ENCODE measurements at regions of chr21 and their contacts with region 1.

Region 1: DNA sequence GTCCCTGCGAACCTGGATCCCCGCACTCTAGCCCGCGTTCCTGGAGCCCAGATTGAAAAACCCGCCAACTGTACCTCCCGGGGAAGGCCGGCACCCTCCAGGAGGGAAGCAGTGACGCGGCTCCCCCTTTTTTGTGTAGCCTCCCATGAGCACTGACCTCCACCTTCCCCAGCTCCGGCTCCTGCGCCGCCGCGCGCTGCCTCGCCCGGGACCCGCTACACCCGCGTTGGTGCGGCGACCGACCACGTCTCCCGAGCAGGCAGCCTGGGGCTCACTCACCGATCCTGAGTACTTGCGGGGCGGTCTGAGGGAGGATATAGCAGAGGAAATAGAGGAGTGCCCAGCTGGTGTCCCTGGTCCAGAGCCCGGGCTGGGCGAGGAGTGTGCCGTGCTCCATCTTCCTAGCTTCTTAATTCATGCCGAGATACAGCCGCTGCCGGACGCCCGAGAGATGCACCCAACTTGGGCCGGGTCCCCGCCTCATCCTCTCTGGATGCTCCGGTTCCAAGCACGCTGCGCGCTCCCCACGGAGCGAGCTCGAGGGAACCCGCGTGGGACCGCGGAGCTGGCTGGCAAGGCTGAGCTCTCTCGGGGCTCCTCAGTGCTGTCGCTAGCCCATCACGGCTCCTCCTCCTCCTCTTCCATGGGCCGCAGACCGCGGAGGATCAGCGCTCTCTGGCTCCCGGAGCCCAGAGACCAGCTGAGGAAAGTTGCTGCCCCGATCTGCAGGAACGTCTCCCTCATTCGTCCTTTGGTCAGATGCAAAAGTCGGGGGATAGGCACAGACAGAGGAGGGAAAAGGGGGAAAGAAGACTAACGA is 482 bp downstream of the GRIK1 start:
- DNase-seq: no peak
- H3K4me3 ChIP-seq: no peak overlapping the region
- H3K27me3 ChIP-seq: peaks cover 14% of the 10 kb centered on the region
- CTCF ChIP-seq: no peak

Region 2: DNA sequence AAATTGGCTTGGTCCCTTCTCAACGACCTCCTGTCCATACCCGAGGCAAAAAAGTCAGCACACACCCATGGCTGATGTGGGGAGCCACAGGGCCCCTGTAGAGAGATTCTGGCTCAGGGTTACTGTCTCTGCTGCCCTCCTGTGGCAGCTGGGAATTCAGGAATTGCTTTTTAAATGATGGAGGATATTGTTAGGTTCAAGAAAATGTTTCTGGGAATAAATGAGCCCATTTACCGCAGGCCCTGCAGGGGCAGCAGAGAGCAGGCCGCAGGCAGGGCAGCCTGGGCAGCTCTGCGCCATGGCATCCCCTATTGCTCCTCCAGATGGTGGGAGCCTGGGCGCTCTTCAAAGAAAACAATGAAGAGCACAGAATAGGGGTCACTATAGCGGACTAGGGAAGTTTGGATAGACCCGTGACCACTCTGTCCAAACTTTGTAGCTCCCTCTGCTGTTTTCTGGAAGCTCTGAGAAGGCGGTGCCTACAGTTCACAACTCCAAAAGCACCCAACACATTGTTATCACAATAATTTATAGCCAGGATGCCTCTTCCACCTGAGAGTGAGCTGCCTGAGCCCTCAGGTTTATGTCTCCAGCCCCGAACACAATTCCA is 439.5 kb before region 1 on chr21:
- CTCF ChIA-PET with region 1: no interaction called
- POLR2A ChIA-PET with region 1: interaction called, 13 read pairs
- DNase-seq: no peak
- H3K4me3 ChIP-seq: no peak overlapping the region
- H3K27me3 ChIP-seq: no peaks in the 10 kb centered on the region
- CTCF ChIP-seq: peak; percentile 52

Region 3: GRCh38 chr21:29888437-29888836 is 50.9 kb before region 1 on chr21:
- CTCF ChIA-PET with region 1: no interaction called
- POLR2A ChIA-PET with region 1: no interaction called
- DNase-seq: peak; percentile 5
- H3K4me3 ChIP-seq: no peak overlapping the region
- H3K27me3 ChIP-seq: no peaks in the 10 kb centered on the region
- CTCF ChIP-seq: no peak

Region 4: DNA sequence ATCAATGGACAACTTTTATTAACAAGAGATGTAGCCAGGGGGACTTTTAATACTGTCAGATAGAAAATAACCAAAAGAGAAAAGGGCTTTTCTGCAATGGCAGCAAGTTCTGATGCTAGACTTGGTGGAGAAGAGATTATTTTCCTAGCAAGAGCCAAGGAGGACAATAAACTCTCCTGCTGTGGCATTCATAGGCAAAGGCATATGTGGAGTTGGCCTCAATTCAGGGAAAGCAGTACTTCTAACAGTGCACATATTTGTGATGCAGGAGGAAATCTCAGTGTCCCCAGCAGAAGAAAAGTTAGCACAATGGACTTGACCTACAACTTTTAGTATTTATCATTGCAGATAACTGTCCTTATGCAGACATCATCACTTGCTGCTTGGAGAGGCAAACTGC is 75.6 kb after region 1 on chr21:
- CTCF ChIA-PET with region 1: no interaction called
- POLR2A ChIA-PET with region 1: no interaction called
- DNase-seq: no peak
- H3K4me3 ChIP-seq: no peak overlapping the region
- H3K27me3 ChIP-seq: no peaks in the 10 kb centered on the region
- CTCF ChIP-seq: no peak

Region 5: DNA sequence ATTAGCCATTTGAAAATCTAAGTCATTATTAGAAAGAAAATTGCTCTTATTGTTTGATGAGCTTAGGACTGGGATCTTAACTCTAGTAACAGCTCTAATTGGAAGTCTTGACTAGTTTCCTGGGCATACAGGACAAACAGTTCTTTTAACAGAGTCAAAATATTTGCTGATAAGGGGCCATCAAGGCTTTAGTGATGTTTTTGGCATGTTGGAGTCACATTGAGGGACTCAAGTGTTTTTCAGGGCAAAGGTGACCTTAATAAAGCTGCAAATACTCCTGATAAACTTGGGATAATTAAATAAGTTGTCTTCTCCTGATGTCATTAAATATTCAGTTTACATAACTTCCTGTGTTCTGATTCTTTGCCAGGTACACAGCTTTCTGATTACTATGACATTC is 628.3 kb after region 1 on chr21:
- CTCF ChIA-PET with region 1: no interaction called
- POLR2A ChIA-PET with region 1: no interaction called
- DNase-seq: no peak
- H3K4me3 ChIP-seq: no peak overlapping the region
- H3K27me3 ChIP-seq: no peaks in the 10 kb centered on the region
- CTCF ChIP-seq: no peak

Measured in BJ (cell line).